Esophagus muscularis mucosa (tissue), 4 donors: ENCODE measurements at regions of chr15 and their contacts with region 1.

Region 1: DNA sequence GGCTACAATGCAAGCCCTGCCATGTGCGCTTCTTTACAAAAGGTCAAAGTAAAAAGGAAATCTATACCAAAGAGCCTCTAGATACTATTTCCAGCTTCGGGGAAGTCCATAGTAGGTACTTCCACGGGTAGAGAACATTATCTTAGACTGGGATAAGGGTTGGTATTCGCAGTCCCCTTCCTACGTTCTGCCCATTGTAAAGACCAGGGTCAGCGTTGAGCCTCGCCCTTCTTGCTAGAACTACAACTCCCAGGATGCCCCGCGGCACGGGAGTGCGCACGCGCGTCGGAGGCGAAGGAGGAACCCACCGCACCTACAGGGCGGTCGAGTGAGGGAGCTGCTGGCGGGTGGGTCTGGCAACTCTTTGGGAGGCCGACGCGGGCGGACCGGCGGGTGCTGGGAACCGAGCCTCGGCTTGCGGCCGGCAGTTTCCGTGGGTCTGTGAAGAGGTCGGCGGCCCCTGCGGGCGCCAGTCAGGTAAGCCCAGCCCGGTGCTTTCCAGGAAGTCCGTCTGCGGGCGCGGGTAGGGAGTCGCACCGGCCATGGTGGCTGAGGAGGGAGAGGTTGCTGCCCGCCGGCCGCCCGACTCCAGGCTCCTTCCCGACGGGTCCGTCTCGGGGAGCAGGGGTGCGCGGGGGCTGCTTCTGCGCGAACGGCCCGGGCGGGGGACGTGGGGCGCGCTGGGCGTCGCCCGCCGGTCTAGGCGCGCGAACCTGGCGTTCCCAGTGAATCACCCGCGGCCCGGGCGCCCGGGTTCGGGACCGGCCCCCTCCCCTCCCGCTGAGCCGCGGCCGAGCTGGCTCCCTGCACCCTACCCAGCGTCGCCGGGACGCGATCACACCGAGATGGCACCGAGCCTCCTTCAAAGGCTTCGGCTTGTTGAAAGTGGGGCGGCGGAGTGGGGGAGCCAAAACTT is at the start of gene TMOD3:
- DNase-seq: peak; percentile 97
- H3K4me3 ChIP-seq: peak within 1 kb of the TSS; percentile 87 to 97 (median 94)
- H3K27ac ChIP-seq: peak within 1 kb of the TSS; percentile 88 to 93 (median 92)
- H3K4me1 ChIP-seq: peaks cover 14 to 47% (median 27%) of the 10 kb centered on the region in 4 donors
- H3K27me3 ChIP-seq: no peaks in the 10 kb centered on the region
- CTCF ChIP-seq: peak in 1 of 3 experiments; percentile 16
- EP300 ChIP-seq: no peak
- POLR2A ChIP-seq: peak; percentile 68
- total RNA-seq, gene TMOD3: 16.2 to 27.9 (median 24.7) TPM

Region 2: DNA sequence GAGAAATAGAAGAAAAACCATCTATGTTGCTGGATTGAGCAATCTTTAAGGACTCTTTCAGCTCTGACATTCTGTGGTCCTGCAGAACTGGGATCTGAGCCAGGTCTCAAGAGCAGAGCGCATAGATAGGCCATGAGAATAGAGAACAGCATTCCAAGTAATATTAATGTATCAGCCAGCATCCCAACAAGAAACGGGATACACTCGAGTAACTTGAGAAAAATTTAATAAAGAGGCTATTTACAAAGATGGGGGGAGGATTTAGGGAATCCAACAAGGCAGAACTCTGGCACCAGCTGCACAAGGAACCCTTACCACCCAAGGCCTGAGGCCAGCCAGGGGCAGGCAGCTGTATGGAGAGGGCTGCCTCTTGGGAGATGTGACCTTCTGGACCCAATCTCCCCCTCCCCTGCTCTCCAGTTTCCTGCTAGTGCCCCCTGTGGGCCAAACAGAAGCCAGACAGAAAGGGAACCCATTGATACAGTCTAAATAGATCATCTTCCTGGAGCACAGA is 70.0 kb before region 1 on chr15:
- intact Hi-C with region 1: loop called (anchors 2 kb)
- DNase-seq: no peak
- H3K4me3 ChIP-seq: no peak overlapping the region
- H3K27ac ChIP-seq: peak overlapping the region in 1 of 4 donors; percentile 9
- H3K4me1 ChIP-seq: peaks cover 19 to 26% (median 25%) of the 10 kb centered on the region in 4 donors
- H3K27me3 ChIP-seq: no peaks in the 10 kb centered on the region
- CTCF ChIP-seq: no peak
- EP300 ChIP-seq: no peak
- POLR2A ChIP-seq: no peak

Region 3: GRCh38 chr15:51874751-51875528 is 45.3 kb after region 1 on chr15:
- intact Hi-C with region 1: loop called (anchors 5 kb)
- DNase-seq: no peak
- H3K4me3 ChIP-seq: no peak overlapping the region
- H3K27ac ChIP-seq: peak overlapping the region; percentile 12 to 58 (median 38)
- H3K4me1 ChIP-seq: peaks cover 25 to 38% (median 32%) of the 10 kb centered on the region in 4 donors
- H3K27me3 ChIP-seq: no peaks in the 10 kb centered on the region
- CTCF ChIP-seq: no peak
- EP300 ChIP-seq: no peak
- POLR2A ChIP-seq: no peak

Region 4: GRCh38 chr15:52876991-52877663 is 1047.5 kb after region 1 on chr15:
- intact Hi-C with region 1: no loop called
- DNase-seq: no peak
- H3K4me3 ChIP-seq: no peak overlapping the region
- H3K27ac ChIP-seq: no peak overlapping the region
- H3K4me1 ChIP-seq: no peaks in the 10 kb centered on the region
- H3K27me3 ChIP-seq: peaks cover 0 to 9% (median 0%) of the 10 kb centered on the region in 4 donors
- CTCF ChIP-seq: no peak
- EP300 ChIP-seq: no peak
- POLR2A ChIP-seq: no peak